CD4-positive, alpha-beta T cell (primary cell): ENCODE measurements at regions of chr15 and their contacts with region 1.

Region 1: GRCh38 chr15:44918136-44918535 is 38.4 kb upstream of the TERB2 start:
- DNase-seq: no peak
- ATAC-seq: no peak
- H3K4me3 ChIP-seq: no peak overlapping the region
- H3K4me3 Mint-ChIP-seq: no peak overlapping the region
- H3K27ac ChIP-seq: no peak overlapping the region
- H3K27ac Mint-ChIP-seq: no peak overlapping the region
- H3K4me1 ChIP-seq: no peaks in the 10 kb centered on the region
- H3K4me1 Mint-ChIP-seq: no peaks in the 10 kb centered on the region
- H3K27me3 ChIP-seq: no peaks in the 10 kb centered on the region
- H3K27me3 Mint-ChIP-seq: no peaks in the 10 kb centered on the region
- CTCF ChIP-seq: no peak

Region 2: GRCh38 chr15:44573386-44573785 is 344.8 kb before region 1 on chr15:
- CTCF ChIA-PET with region 1: no interaction called
- POLR2A ChIA-PET with region 1: no interaction called
- intact Hi-C with region 1: loop called in 1 of 2 experiments (anchors 5 kb)
- DNase-seq: no peak
- ATAC-seq: no peak
- H3K4me3 ChIP-seq: no peak overlapping the region
- H3K4me3 Mint-ChIP-seq: no peak overlapping the region
- H3K27ac ChIP-seq: no peak overlapping the region
- H3K27ac Mint-ChIP-seq: peak overlapping the region; percentile 76
- H3K4me1 ChIP-seq: peaks cover 3% of the 10 kb centered on the region
- H3K4me1 Mint-ChIP-seq: peaks cover 12% of the 10 kb centered on the region
- H3K27me3 ChIP-seq: no peaks in the 10 kb centered on the region
- H3K27me3 Mint-ChIP-seq: no peaks in the 10 kb centered on the region
- CTCF ChIP-seq: no peak

Region 3: DNA sequence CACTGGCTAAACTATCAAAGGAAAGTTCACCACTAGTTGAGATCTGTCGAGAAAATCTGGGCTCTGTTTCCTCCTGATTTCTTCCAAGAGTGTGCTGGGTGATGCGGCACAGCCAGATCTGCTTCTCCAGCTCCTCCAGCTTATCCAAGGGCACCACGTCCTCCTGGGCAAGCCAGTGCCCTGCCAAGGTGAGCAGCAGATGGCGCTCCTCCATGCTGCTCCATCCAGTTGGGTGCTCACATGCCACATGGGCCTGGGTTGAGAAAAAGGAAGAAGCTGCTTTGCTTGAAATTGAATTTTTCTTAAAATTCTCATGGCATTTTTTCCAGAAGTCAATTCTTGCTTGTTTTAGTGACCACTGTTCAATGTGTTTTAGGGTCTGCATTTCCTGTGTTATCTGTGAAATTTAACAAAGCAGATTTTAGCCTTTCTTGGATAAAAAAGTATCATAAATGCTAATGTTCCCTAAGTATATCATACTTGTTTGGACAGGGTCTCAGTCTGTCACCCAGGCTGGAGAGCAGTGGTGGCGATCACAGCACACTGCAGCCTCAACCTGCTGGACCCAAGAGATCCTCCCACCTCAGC is 333.9 kb before region 1 on chr15:
- CTCF ChIA-PET with region 1: no interaction called
- POLR2A ChIA-PET with region 1: no interaction called
- intact Hi-C with region 1: loop called (anchors 5 kb)
- DNase-seq: peak; percentile 32 to 78 (median 54)
- ATAC-seq: peak; percentile 94
- H3K4me3 ChIP-seq: no peak overlapping the region
- H3K4me3 Mint-ChIP-seq: no peak overlapping the region
- H3K27ac ChIP-seq: no peak overlapping the region
- H3K27ac Mint-ChIP-seq: no peak overlapping the region
- H3K4me1 ChIP-seq: peaks cover 1% of the 10 kb centered on the region
- H3K4me1 Mint-ChIP-seq: peaks cover 21% of the 10 kb centered on the region
- H3K27me3 ChIP-seq: no peaks in the 10 kb centered on the region
- H3K27me3 Mint-ChIP-seq: no peaks in the 10 kb centered on the region
- CTCF ChIP-seq: peak; percentile 64